CD4-positive, alpha-beta T cell (primary cell): ENCODE measurements at regions of chr3 and their contacts with region 1.

Region 1: GRCh38 chr3:47440131-47440530 is 35.6 kb downstream of the SCAP start:
- DNase-seq: no peak
- ATAC-seq: no peak
- H3K4me3 ChIP-seq: no peak overlapping the region
- H3K4me3 Mint-ChIP-seq: no peak overlapping the region
- H3K27ac ChIP-seq: no peak overlapping the region
- H3K27ac Mint-ChIP-seq: no peak overlapping the region
- H3K4me1 ChIP-seq: peaks cover 3% of the 10 kb centered on the region
- H3K4me1 Mint-ChIP-seq: peaks cover 12% of the 10 kb centered on the region
- H3K27me3 ChIP-seq: no peaks in the 10 kb centered on the region
- H3K27me3 Mint-ChIP-seq: no peaks in the 10 kb centered on the region
- CTCF ChIP-seq: no peak

Region 2: GRCh38 chr3:47475570-47476329 is 35.6 kb after region 1 on chr3 and contains the start of gene SCAP:
- CTCF ChIA-PET with region 1: interaction called, 7 read pairs
- POLR2A ChIA-PET with region 1: no interaction called
- intact Hi-C with region 1: loop called in 1 of 2 experiments (anchors 5 kb)
- DNase-seq: peak; percentile 93 to 98 (median 96)
- ATAC-seq: peak; percentile 92
- H3K4me3 ChIP-seq: peak within 1 kb of the TSS; percentile 68
- H3K4me3 Mint-ChIP-seq: peak within 1 kb of the TSS; percentile 99
- H3K27ac ChIP-seq: peak within 1 kb of the TSS; percentile 73 to 74
- H3K27ac Mint-ChIP-seq: peak within 1 kb of the TSS; percentile 89
- H3K4me1 ChIP-seq: peaks cover 28% of the 10 kb centered on the region
- H3K4me1 Mint-ChIP-seq: peaks cover 44% of the 10 kb centered on the region
- H3K27me3 ChIP-seq: no peaks in the 10 kb centered on the region
- H3K27me3 Mint-ChIP-seq: no peaks in the 10 kb centered on the region
- CTCF ChIP-seq: peak; percentile 90
- total RNA-seq, gene SCAP: 58.3 to 60.3 TPM